ENCODE measurements at regions of chr19 and their contacts with region 1.

Region 1: DNA sequence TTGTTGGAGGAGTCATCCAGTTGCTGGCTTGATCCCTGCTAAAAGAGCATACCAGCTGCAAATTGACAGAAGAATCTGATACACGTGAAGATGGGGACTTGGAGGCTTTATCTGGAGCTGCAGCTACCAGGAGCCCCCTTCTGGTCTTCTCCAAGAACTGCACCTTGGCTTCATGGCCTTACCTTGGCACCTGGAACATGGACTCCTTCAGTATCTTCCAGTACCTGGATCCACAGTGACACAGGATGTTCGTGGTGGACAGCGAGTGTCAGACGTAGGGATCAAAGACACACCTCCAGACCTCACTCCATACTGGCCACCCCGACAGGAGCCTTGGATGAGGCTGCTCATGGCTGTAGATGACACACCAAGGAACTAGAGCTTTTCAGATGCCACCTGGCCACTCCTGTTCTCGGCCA is 9.9 kb upstream of the ACSBG2 start:
- DNase-seq: no peak
- ATAC-seq: peak; percentile 97
- H3K4me3 ChIP-seq: no peak overlapping the region
- H3K27ac ChIP-seq: no peak overlapping the region
- H3K4me1 ChIP-seq: no peaks in the 10 kb centered on the region
- H3K27me3 ChIP-seq: no peaks in the 10 kb centered on the region
- CTCF ChIP-seq: peak; percentile 98

Region 2: DNA sequence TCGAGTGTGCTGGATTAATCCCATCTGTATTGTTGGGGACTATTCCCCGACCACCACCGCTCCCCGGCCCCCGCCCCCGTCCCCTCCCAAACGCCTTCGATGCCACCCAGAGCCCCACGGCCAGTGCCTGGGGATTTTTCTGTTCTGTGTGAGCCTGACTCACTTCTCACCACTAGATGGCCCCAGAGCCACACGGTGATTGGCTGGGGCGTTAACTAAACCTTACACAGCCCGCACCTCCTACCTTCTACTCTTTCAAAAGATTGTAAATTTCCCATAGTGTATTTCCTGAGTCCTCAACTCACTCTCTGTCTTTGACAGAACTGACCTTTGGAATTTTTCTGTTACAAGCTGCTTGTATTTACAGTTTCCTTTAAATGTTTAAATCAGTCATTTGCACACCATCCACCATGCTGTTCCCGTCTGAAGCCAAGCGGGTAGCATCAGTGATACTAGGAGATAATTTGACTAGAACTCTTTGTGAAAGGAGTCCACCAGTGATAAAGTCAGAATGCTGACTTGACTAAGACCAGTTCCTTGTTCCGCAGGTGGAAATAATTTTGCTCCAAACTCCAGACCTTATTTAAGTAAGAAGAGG is 76.7 kb before region 1 on chr19:
- intact Hi-C with region 1: loop called (anchors 5 kb)
- DNase-seq: peak; percentile 82
- ATAC-seq: peak; percentile 99
- H3K4me3 ChIP-seq: no peak overlapping the region
- H3K27ac ChIP-seq: no peak overlapping the region
- H3K4me1 ChIP-seq: peaks cover 3% of the 10 kb centered on the region
- H3K27me3 ChIP-seq: no peaks in the 10 kb centered on the region
- CTCF ChIP-seq: peak; percentile 88

Region 3: GRCh38 chr19:6076675-6077463 is 48.7 kb before region 1 on chr19:
- intact Hi-C with region 1: no loop called
- DNase-seq: no peak
- ATAC-seq: peak; percentile 68
- H3K4me3 ChIP-seq: no peak overlapping the region
- H3K27ac ChIP-seq: peak overlapping the region; percentile 71
- H3K4me1 ChIP-seq: peaks cover 7% of the 10 kb centered on the region
- H3K27me3 ChIP-seq: no peaks in the 10 kb centered on the region
- CTCF ChIP-seq: no peak

Region 4: GRCh38 chr19:6171566-6171965 is 46.0 kb after region 1 on chr19:
- intact Hi-C with region 1: no loop called
- DNase-seq: no peak
- ATAC-seq: no peak
- H3K4me3 ChIP-seq: no peak overlapping the region
- H3K27ac ChIP-seq: no peak overlapping the region
- H3K4me1 ChIP-seq: no peaks in the 10 kb centered on the region
- H3K27me3 ChIP-seq: no peaks in the 10 kb centered on the region
- CTCF ChIP-seq: no peak

Measured in upper lobe of right lung (tissue), 1 donor.